Activated CD4-positive, alpha-beta memory T cell treated with anti-CD3 and anti-CD28 coated beads, Interleukin-2, amount 10 ng/mL, durations not matched to agents 7 days and 5 days (primary cell): ENCODE measurements at regions of chr11 and their contacts with region 1.

Region 1: GRCh38 chr11:62787005-62787759 is at the start of gene TMEM179B:
- DNase-seq: peak; percentile 98
- H3K4me3 Mint-ChIP-seq: peak within 1 kb of the TSS; percentile 95
- H3K27ac Mint-ChIP-seq: peak within 1 kb of the TSS; percentile 97
- H3K4me1 Mint-ChIP-seq: peaks cover 47% of the 10 kb centered on the region
- H3K27me3 Mint-ChIP-seq: no peaks in the 10 kb centered on the region
- total RNA-seq, gene TMEM179B: 46.9 to 48.2 TPM

Region 2: DNA sequence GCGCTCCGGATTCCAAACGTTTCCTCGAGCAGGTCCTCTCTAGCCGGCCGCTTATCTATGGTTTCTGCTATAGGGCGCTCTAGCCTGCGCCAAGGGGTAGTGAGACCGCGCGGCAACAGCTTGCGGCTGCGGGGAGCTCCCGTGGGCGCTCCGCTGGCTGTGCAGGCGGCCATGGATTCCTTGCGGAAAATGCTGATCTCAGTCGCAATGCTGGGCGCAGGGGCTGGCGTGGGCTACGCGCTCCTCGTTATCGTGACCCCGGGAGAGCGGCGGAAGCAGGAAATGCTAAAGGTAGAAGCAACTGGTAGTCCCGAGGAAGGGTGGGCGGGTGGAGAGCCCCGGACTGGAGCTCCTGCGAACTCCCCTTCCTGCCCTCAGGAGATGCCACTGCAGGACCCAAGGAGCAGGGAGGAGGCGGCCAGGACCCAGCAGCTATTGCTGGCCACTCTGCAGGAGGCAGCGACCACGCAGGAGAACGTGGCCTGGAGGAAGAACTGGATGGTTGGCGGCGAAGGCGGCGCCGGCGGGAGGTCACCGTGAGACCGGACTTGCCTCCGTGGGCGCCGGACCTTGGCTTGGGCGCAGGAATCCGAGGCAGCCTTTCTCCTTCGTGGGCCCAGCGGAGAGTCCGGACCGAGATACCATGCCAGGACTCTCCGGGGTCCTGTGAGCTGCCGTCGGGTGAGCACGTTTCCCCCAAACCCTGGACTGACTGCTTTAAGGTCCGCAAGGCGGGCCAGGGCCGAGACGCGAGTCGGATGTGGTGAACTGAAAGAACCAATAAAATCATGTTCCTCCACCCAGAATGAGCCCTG is 115.4 kb before region 1 on chr11 and contains the starts of genes LBHD1 and UQCC3:
- CTCF ChIA-PET with region 1: interaction called, 3 read pairs
- POLR2A ChIA-PET with region 1: interaction called, 16 read pairs
- DNase-seq: peak; percentile 91
- H3K4me3 Mint-ChIP-seq: peak within 1 kb of the TSS; percentile 91
- H3K27ac Mint-ChIP-seq: peak within 1 kb of the TSS; percentile 91
- H3K4me1 Mint-ChIP-seq: peaks cover 68% of the 10 kb centered on the region
- H3K27me3 Mint-ChIP-seq: no peaks in the 10 kb centered on the region
- total RNA-seq, gene LBHD1: 17.2 to 18.3 TPM
- total RNA-seq, gene UQCC3: 7.9 to 8.2 TPM

Region 3: GRCh38 chr11:62726915-62727763 is 60.0 kb before region 1 on chr11 and contains the start of gene HNRNPUL2:
- CTCF ChIA-PET with region 1: interaction called, 39 read pairs
- POLR2A ChIA-PET with region 1: interaction called, 53 read pairs
- DNase-seq: peak; percentile 99
- H3K4me3 Mint-ChIP-seq: peak within 1 kb of the TSS; percentile 87
- H3K27ac Mint-ChIP-seq: peak within 1 kb of the TSS; percentile 97
- H3K4me1 Mint-ChIP-seq: peaks cover 50% of the 10 kb centered on the region
- H3K27me3 Mint-ChIP-seq: no peaks in the 10 kb centered on the region
- total RNA-seq, gene HNRNPUL2: 65.1 to 65.3 TPM

Region 4: DNA sequence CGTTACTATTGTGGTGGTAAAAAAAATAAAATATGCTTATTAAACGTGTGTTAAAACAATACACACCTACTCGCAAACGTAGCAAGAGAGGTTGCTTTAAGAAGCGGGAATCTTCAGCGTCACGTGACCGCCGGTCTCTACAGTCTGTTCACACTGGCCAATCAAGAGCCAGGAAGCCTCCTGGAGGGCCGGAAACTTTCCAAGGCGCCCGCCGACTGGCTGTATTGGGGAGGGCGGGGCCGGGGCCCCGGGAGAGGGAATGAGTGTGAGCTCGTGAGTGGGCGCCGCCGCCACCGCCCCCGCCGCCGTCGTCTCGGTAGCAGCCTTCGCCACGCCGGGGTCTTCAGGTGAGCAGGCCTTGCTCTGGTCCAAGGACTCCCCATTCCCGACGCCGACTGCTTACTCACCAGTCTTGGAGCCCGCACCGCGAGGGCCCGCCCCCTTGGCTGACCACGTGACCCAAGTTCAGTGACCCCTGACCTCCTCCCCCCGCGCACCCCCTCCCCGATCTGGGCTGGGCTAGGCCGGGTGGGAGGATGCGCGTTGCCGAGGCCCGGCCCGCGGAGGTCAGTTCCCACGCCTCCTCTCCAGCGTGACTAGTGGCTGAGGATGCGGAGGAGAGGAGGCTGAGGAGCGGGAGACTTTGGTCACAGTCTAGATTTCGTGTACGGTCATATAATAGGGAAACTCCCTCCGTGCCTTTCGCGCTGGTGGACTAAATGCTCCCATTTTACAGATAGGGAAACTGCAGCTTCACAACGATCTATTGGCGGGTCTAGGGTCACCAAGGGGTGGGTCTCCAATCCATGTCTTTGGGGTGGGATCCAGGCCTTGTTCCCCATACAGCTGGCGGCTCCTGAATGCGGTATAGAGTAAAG is 15.8 kb before region 1 on chr11 and contains the start of gene TAF6L:
- CTCF ChIA-PET with region 1: interaction called, 108 read pairs
- POLR2A ChIA-PET with region 1: interaction called, 68 read pairs
- DNase-seq: peak; percentile 96
- H3K4me3 Mint-ChIP-seq: peak within 1 kb of the TSS; percentile 87
- H3K27ac Mint-ChIP-seq: peak within 1 kb of the TSS; percentile 88
- H3K4me1 Mint-ChIP-seq: peaks cover 30% of the 10 kb centered on the region
- H3K27me3 Mint-ChIP-seq: no peaks in the 10 kb centered on the region
- total RNA-seq, gene TAF6L: 15.2 to 16.0 TPM

Region 5: GRCh38 chr11:62805076-62805892 is 18.1 kb after region 1 on chr11 and contains the start of gene NXF1:
- CTCF ChIA-PET with region 1: interaction called, 32 read pairs
- POLR2A ChIA-PET with region 1: interaction called, 134 read pairs
- DNase-seq: peak; percentile 96
- H3K4me3 Mint-ChIP-seq: peak within 1 kb of the TSS; percentile 90
- H3K27ac Mint-ChIP-seq: peak within 1 kb of the TSS; percentile 86
- H3K4me1 Mint-ChIP-seq: peaks cover 40% of the 10 kb centered on the region
- H3K27me3 Mint-ChIP-seq: no peaks in the 10 kb centered on the region
- total RNA-seq, gene NXF1: 80.3 to 82.4 TPM

Region 6: GRCh38 chr11:62860835-62861563 is 73.8 kb after region 1 on chr11:
- CTCF ChIA-PET with region 1: interaction called, 53 read pairs
- POLR2A ChIA-PET with region 1: interaction called, 116 read pairs
- DNase-seq: no peak
- H3K4me3 Mint-ChIP-seq: no peak overlapping the region
- H3K27ac Mint-ChIP-seq: peak overlapping the region; percentile 63
- H3K4me1 Mint-ChIP-seq: peaks cover 67% of the 10 kb centered on the region
- H3K27me3 Mint-ChIP-seq: no peaks in the 10 kb centered on the region